Sciatic nerve (tissue), 2 donors: ENCODE measurements at regions of chr1 and their contacts with region 1.

Region 1: DNA sequence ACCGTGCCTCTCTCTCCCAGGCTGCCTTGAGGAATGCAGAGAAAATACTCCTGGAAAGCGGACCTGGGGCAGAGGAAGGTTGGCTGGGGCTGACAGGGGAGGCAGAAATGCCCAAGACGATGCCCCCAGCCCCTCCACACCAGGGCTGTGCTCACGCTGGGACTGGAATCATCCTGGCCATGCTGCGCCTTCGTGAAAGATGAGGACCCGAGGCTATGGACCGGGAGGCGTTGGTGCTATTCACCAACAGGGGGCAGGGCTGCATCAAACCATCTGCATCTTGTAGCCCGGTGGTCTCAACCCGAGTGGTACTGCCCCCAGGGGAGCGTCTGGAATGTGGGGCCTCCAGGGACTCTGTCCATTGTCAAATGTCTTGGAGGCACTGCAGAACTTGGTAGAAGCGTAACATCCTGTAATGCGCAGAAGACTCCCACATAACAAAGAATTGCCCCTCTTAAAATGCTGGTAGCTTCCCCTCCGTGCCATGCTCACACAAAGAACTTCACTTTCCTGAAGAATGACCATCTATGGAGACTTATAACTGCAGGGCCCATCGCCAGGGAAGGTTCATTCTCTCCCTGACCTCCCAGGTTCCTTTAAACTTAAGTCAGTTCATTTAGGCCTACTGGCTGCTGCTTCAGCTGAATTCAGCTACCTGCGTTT is 251.2 kb downstream of the RRAGC start:
- DNase-seq: no peak
- ATAC-seq: no peak

Region 2: GRCh38 chr1:38727684-38728584 is 119.6 kb after region 1 on chr1:
- intact Hi-C with region 1: no loop called
- DNase-seq: peak; percentile 73
- ATAC-seq: peak; percentile 68

Region 3: DNA sequence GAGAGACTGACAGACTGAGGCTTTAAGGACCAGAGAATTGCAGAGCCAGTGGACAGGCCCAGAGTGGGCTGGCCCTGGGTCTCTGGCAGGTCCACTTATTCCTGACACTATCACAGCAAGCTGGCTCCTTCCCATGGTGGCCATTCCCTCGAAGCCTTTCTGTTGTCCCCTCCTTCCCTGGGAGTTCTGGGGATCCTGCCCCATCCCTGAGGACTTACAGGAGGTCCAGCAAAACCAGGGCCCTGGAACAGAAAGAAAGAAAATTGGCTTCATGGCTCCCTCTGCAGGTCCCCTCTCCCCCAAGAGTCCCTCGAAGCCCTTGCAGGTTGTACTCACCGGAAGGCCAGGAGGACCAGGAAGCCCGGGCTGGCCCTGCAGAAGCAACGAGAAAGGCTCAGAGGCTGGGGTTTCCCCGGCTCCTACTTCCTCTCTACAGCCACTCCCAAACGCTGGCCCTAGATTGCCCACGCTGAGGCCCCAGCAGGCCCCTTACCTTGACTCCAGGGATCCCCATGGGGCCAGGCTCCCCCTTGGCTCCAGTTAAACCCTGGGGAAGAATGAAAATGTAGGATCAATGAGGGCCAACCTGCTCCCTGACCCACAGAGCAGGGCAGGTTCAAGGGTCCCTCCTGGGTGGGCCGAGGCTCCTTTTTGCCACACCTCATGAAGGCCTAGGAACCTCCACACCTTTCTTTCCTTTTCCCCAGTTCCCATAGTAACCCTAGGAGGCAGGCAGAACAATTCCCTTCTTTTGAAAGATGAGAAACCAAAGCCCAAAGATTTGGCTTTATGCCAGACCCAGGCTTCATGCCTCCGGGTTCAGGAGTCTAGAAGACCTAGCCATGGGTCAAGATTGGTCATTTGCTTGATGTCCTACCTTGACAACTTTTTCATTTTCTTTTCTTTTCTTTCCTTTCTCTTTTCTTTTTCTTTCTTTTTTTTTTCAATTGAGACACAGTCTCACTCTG is 1704.2 kb after region 1 on chr1:
- intact Hi-C with region 1: loop called (anchors 5 kb)
- DNase-seq: no peak
- ATAC-seq: no peak